Endothelial cell of umbilical vein (primary cell): ENCODE measurements at regions of chr3 and their contacts with region 1.

Region 1: GRCh38 chr3:157493627-157494550 is 9.3 kb downstream of the VEPH1 start:
- DNase-seq: peak; percentile 81
- H3K4me3 ChIP-seq: no peak overlapping the region
- H3K27ac ChIP-seq: peak overlapping the region; percentile 8
- H3K4me1 ChIP-seq: no peaks in the 10 kb centered on the region
- H3K27me3 ChIP-seq: no peaks in the 10 kb centered on the region
- CTCF ChIP-seq: peak; percentile 28 to 31
- POLR2A ChIP-seq: no peak

Region 2: DNA sequence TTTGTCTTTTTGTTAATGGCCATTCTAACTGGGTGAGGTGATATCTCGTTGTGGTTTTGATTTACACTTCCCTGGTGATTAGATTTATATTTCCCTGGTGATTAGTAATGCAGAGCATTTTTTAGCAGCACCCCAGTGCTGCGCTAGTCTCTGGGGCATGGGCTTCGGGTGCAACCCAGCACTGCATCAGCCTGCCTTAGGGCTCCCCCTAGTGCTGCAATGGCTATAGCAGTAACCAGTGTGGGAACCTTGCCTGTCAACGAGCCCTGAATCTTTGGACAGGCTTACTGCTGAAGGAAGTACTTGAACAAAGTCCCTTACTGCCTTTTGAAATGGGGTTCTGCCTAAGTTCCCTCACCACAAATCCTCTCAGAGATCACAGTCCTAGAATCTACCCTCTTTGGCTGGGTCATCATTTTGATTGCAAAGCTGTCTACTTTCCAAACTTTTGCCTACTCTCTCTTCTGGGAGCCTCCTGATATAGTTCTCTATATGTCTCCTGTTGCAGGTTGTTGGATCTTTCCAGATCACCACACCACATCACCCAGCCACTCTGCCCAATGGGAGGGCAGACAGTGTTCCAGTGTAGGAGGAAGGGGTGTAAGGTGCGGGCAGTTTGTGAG is 254.7 kb before region 1 on chr3:
- CTCF ChIA-PET with region 1: no interaction called
- POLR2A ChIA-PET with region 1: no interaction called
- dilution Hi-C with region 1: no loop called
- intact Hi-C with region 1: loop called (anchors 1 kb)
- DNase-seq: peak; percentile 57
- H3K4me3 ChIP-seq: no peak overlapping the region
- H3K27ac ChIP-seq: no peak overlapping the region
- H3K4me1 ChIP-seq: peaks cover 15% of the 10 kb centered on the region
- H3K27me3 ChIP-seq: no peaks in the 10 kb centered on the region
- CTCF ChIP-seq: peak; percentile 71 to 79
- POLR2A ChIP-seq: no peak

Region 3: DNA sequence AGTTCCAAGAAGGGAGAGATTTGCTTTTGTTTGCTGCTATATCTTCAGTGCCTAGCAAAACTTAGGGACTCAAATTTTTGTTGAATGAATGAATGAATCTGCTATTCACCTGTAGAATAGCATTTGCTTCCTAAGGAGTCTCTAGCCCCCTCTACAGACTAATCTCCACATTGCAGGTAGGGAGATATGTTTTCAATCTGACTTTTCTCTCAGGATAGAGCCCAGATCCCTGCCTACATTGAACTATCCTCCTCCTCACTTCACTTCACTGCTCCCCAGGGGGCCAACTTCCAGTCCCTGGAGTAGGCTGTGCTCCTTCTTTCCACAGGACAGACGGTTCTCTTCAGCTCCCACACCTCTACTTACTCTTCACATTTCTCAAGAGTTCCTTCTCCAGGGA is 139.2 kb before region 1 on chr3:
- CTCF ChIA-PET with region 1: no interaction called
- POLR2A ChIA-PET with region 1: no interaction called
- dilution Hi-C with region 1: no loop called
- intact Hi-C with region 1: loop called (anchors 5 kb)
- DNase-seq: peak; percentile 64
- H3K4me3 ChIP-seq: no peak overlapping the region
- H3K27ac ChIP-seq: peak overlapping the region; percentile 8
- H3K4me1 ChIP-seq: peaks cover 41% of the 10 kb centered on the region
- H3K27me3 ChIP-seq: no peaks in the 10 kb centered on the region
- CTCF ChIP-seq: peak; percentile 47 to 62
- POLR2A ChIP-seq: no peak

Region 4: GRCh38 chr3:157447026-157447694 is 46.7 kb before region 1 on chr3:
- CTCF ChIA-PET with region 1: interaction called, 6 read pairs
- POLR2A ChIA-PET with region 1: no interaction called
- dilution Hi-C with region 1: no loop called
- intact Hi-C with region 1: loop called (anchors 2 kb)
- DNase-seq: peak; percentile 67
- H3K4me3 ChIP-seq: no peak overlapping the region
- H3K27ac ChIP-seq: no peak overlapping the region
- H3K4me1 ChIP-seq: peaks cover 34% of the 10 kb centered on the region
- H3K27me3 ChIP-seq: no peaks in the 10 kb centered on the region
- CTCF ChIP-seq: peak; percentile 47 to 54
- POLR2A ChIP-seq: no peak